Esophagus squamous epithelium (tissue), 5 donors: ENCODE measurements at regions of chr3 and their contacts with region 1.

Region 1: GRCh38 chr3:183766745-183767606 is 58.4 kb downstream of the MAP6D1 start:
- DNase-seq: no peak
- H3K4me3 ChIP-seq: no peak overlapping the region
- H3K27ac ChIP-seq: no peak overlapping the region
- H3K4me1 ChIP-seq: peaks cover 0 to 9% (median 0%) of the 10 kb centered on the region in 3 donors
- H3K27me3 ChIP-seq: no peaks in the 10 kb centered on the region
- CTCF ChIP-seq: peak; percentile 73 to 87 (median 77)
- POLR2A ChIP-seq: no peak

Region 2: DNA sequence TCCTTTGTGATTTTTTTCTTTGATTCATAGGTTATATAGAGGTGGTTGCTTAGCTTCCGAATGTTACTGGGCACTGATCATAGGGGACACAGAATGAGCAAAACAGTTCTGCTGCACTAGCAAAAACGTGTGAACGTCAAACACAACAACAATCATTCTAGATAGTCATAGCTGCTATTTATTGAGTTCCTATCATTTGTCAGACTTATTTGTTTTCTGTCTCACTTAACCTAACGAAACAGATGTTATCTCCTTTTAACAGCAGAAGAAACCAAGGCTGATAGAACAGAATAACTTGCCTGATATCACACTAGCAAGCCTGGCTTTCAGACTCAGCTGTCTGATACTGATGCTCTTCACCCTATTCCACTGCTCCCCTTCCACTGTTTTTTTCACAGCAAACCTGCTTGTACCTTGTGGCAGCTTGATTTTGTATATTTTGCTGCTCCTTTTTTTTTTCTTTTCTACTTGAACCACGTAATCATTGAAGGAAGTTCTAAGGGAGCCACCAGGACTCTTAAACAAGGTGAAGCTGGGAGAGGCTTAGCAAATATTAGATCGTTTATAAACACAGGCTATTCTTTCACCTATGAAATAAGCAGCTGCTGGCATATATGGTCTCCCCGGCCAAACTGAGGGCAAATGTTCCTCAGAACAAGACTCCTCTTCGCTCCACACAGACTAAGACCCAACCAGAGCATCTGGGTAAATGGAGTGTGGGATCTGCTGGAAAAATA is 417.4 kb before region 1 on chr3:
- intact Hi-C with region 1: no loop called
- DNase-seq: no peak
- H3K4me3 ChIP-seq: no peak overlapping the region
- H3K27ac ChIP-seq: peak overlapping the region in 1 of 4 donors; percentile 27
- H3K4me1 ChIP-seq: no peaks in the 10 kb centered on the region
- H3K27me3 ChIP-seq: no peaks in the 10 kb centered on the region
- CTCF ChIP-seq: no peak
- POLR2A ChIP-seq: no peak

Region 3: GRCh38 chr3:183477801-183478456 is 289.0 kb before region 1 on chr3:
- intact Hi-C with region 1: loop called (anchors 10 kb)
- DNase-seq: no peak
- H3K4me3 ChIP-seq: no peak overlapping the region
- H3K27ac ChIP-seq: no peak overlapping the region
- H3K4me1 ChIP-seq: peaks cover 0 to 27% (median 10%) of the 10 kb centered on the region in 3 donors
- H3K27me3 ChIP-seq: peaks cover 0 to 44% (median 0%) of the 10 kb centered on the region in 4 donors
- CTCF ChIP-seq: no peak
- POLR2A ChIP-seq: no peak